Activated B cell treated with CpG ODN at 0.5 μM for 24 hours (primary cell): ENCODE measurements at regions of chr9 and their contacts with region 1.

Region 1: GRCh38 chr9:21413624-21414023 is 4.7 kb downstream of the IFNA8 start:
- DNase-seq: no peak
- ATAC-seq: no peak
- H3K4me3 Mint-ChIP-seq: no peak overlapping the region
- H3K27ac Mint-ChIP-seq: no peak overlapping the region
- H3K4me1 Mint-ChIP-seq: peaks cover 31% of the 10 kb centered on the region
- H3K27me3 Mint-ChIP-seq: peaks cover 44% of the 10 kb centered on the region
- CTCF ChIP-seq: no peak

Region 2: DNA sequence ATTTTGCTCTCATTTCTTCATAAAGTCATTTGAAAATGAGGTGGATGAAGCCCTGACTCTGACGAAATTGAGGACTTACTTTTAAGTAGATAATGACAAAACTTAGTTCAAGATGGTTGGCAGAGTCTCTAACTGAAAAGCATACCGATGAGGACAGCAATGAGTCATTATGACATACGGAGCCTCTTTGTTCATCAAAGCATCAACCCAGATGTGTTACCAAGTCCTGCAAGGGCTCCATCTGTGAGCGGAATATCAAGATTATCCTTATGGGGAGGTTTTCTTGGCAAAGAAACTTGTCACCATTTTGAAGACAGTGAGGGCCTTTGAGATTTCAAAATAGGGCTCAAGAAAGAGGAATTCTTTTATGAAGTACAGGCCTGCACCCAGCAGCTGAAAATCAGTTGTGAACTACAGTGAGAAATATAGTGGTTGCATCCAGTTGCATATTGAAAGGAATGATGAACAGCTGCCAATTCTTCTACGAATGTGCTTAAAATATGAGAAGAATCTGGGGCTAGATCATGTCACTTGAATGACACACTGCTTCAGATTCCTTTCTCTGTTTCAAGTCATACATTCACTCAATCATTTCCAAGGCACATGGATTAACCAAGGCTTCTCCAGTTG is 1538.2 kb before region 1 on chr9:
- CTCF ChIA-PET with region 1: no interaction called
- POLR2A ChIA-PET with region 1: no interaction called
- intact Hi-C with region 1: no loop called
- DNase-seq: no peak
- ATAC-seq: no peak
- H3K4me3 Mint-ChIP-seq: no peak overlapping the region
- H3K27ac Mint-ChIP-seq: no peak overlapping the region
- H3K4me1 Mint-ChIP-seq: no peaks in the 10 kb centered on the region
- H3K27me3 Mint-ChIP-seq: peaks cover 2% of the 10 kb centered on the region
- CTCF ChIP-seq: no peak

Region 3: GRCh38 chr9:21402386-21403251 is 11.0 kb before region 1 on chr9:
- CTCF ChIA-PET with region 1: no interaction called
- POLR2A ChIA-PET with region 1: no interaction called
- intact Hi-C with region 1: loop called (anchors 2 kb)
- DNase-seq: no peak
- ATAC-seq: no peak
- H3K4me3 Mint-ChIP-seq: peak overlapping the region; percentile 42
- H3K27ac Mint-ChIP-seq: no peak overlapping the region
- H3K4me1 Mint-ChIP-seq: peaks cover 11% of the 10 kb centered on the region
- H3K27me3 Mint-ChIP-seq: peaks cover 53% of the 10 kb centered on the region
- CTCF ChIP-seq: no peak